ENCODE measurements at regions of chr19 and their contacts with region 1.

Region 1: DNA sequence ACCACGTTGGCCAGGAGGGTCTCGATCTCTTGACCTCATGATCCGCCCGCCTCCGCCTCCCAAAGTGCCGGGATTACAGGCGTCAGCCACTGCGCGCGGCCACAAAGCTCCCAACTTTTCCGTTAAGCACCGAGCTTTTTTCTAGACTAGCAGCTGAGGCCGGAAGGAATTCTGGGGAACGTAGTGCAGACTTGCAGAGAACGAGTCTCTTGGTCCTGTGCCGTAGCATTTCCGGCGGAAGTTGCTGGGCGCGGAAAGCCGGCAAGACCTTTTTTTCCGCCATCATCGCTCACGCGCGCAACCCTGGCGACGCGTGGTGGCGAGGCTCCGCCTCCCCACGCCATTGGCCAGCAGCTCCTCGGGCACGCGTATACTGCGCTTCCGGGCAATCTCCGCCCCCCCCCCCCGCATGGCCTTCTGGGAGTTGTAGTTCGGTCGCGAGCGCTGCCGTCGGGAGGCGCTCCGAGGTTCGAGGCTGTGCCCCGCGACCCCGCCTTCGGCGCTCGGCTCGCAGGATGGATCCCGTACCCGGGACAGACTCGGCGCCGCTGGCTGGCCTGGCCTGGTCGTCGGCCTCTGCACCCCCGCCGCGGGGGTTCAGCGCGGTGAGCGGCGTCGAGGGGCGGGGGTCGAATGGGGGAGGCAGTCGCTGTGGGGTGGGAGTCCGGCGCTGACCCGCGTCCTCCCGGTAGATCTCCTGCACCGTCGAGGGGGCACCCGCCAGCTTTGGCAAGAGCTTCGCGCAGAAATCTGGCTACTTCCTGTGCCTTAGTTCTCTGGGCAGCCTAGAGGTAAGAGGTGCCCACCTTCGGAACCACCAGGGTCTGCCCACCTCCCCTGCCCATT is at the start of gene MVB12A:
- DNase-seq: peak; percentile 98
- H3K27ac ChIP-seq: peak within 1 kb of the TSS; percentile 87
- CTCF ChIP-seq: no peak

Region 2: DNA sequence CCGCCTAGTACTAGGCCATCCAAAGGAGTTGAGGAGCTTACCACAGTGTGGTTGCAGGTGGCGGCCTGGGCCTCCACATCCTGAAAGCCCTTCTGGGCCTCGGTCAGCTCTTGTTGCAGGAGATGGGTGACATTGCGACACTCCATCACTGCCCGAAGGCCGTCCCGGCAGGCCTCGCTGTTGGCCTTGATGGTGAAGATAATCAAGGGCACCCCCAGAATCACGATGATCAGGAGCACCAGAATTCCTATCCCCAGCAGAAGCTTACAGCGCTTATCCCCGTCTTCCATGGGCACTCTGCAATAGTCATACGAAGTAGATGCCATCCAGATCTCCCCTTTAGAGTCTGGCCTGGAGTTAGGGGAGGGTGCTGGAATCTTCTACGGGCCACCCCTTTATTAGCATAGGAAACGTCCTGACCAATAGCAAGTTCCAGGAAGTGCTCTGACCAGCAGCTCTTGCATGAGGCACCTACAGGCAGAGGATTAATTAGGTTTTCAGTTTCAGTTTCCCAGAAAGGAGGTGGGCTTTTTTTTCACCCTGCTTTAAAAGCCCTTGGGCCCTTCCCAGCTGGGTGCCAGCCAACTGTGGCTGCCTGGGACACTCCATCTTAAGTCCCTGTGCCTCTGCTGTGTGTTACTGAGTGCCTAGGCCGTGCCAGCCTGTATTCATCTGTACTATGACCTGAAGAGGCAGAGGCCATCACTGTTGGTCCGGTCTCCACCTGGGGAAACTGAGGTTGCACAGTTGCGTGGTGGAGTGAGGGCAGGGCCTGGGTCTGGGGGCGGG is 14.4 kb before region 1 on chr19 and contains the start of gene BST2:
- CTCF ChIA-PET with region 1: no interaction called
- POLR2A ChIA-PET with region 1: interaction called, 13 read pairs
- DNase-seq: peak; percentile 92
- H3K27ac ChIP-seq: peak within 1 kb of the TSS; percentile 24
- CTCF ChIP-seq: no peak

Region 3: GRCh38 chr19:17441241-17442021 is 21.6 kb after region 1 on chr19:
- CTCF ChIA-PET with region 1: no interaction called
- POLR2A ChIA-PET with region 1: no interaction called
- DNase-seq: peak; percentile 65
- H3K27ac ChIP-seq: no peak overlapping the region
- CTCF ChIP-seq: peak; percentile 62

Region 4: DNA sequence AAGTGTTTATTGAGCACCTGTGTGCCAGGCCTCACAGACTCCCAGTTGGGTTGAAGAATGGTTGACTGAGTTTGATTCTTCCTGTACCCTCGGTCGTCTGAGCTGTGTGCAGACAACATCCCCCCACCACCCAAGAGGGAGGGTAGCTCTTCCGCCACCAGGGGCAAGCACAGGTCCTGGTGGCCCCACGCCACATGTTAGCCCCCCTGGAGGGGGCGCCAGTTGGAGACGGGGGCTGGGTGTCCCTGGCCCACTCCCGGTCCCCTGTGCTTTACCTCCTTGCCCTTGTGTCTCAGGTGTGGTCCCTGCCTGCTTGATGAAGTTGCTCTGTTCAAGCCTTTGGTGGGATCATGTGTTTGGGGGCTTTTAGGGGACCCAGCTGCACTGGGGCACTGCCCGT is 162.8 kb after region 1 on chr19:
- CTCF ChIA-PET with region 1: no interaction called
- POLR2A ChIA-PET with region 1: no interaction called
- DNase-seq: no peak
- H3K27ac ChIP-seq: peak overlapping the region; percentile 7; the same call in 1 of the 2 replicates
- CTCF ChIP-seq: no peak